Naive thymus-derived CD4-positive, alpha-beta T cell (primary cell): ENCODE measurements at regions of chr1 and their contacts with region 1.

Region 1: GRCh38 chr1:53485478-53486394 is 26.5 kb downstream of the DMRTB1 start:
- DNase-seq: peak in 7 of 9 donors; percentile 15 to 66 (median 42)
- ATAC-seq: peak; percentile 71
- H3K4me3 ChIP-seq: no peak overlapping the region
- H3K4me3 Mint-ChIP-seq: no peak overlapping the region
- H3K27ac ChIP-seq: no peak overlapping the region
- H3K27ac Mint-ChIP-seq: no peak overlapping the region
- H3K4me1 ChIP-seq: no peaks in the 10 kb centered on the region
- H3K4me1 Mint-ChIP-seq: peaks cover 0 to 9% (median 0%) of the 10 kb centered on the region in 7 donors
- H3K27me3 ChIP-seq: no peaks in the 10 kb centered on the region
- H3K27me3 Mint-ChIP-seq: peaks cover 20 to 52% (median 35%) of the 10 kb centered on the region in 5 donors

Region 2: GRCh38 chr1:53238197-53239155 is 247.3 kb before region 1 on chr1 and contains the start of gene MAGOH:
- CTCF ChIA-PET with region 1: no interaction called
- POLR2A ChIA-PET with region 1: no interaction called
- intact Hi-C with region 1: no loop called
- DNase-seq: peak; percentile 90 to 96 (median 95)
- ATAC-seq: peak; percentile 98
- H3K4me3 ChIP-seq: peak within 1 kb of the TSS; percentile 97
- H3K4me3 Mint-ChIP-seq: peak within 1 kb of the TSS; percentile 96 to 99 (median 98)
- H3K27ac ChIP-seq: peak within 1 kb of the TSS; percentile 94
- H3K27ac Mint-ChIP-seq: peak within 1 kb of the TSS; percentile 92 to 99 (median 98)
- H3K4me1 ChIP-seq: peaks cover 18 to 19% of the 10 kb centered on the region in 2 donors
- H3K4me1 Mint-ChIP-seq: peaks cover 18 to 47% (median 32%) of the 10 kb centered on the region in 7 donors
- H3K27me3 ChIP-seq: no peaks in the 10 kb centered on the region
- H3K27me3 Mint-ChIP-seq: peaks cover 0 to 2% (median 0%) of the 10 kb centered on the region in 5 donors
- total RNA-seq, gene MAGOH: 37.7 to 76.7 (median 52.3) TPM

Region 3: DNA sequence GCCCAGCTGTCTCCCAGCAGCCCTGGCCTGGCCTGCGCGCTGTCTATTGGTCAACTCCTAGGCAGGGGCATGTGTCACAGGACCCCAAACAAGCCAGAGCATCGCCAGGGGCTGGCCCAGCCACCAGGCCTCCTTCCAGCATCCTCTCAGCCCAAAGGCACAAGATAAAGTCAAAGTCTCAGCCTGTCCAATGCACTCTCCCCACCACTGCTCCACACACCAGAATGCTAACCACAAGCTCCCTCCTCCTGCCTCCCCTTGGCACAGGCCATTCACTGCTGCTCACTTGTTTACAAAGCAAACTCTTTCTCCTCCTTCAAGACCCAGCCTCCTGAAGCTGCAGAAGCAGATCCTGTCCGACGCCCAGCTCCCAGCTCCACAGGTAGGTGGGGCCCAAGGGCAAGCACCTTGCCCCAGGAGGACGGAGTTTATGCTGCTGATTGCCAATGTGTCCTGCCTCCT is 106.8 kb after region 1 on chr1:
- CTCF ChIA-PET with region 1: no interaction called
- POLR2A ChIA-PET with region 1: no interaction called
- intact Hi-C with region 1: loop called in 1 of 2 experiments (anchors 10 kb)
- DNase-seq: no peak
- ATAC-seq: no peak
- H3K4me3 ChIP-seq: no peak overlapping the region
- H3K4me3 Mint-ChIP-seq: no peak overlapping the region
- H3K27ac ChIP-seq: no peak overlapping the region
- H3K27ac Mint-ChIP-seq: no peak overlapping the region
- H3K4me1 ChIP-seq: no peaks in the 10 kb centered on the region
- H3K4me1 Mint-ChIP-seq: no peaks in the 10 kb centered on the region
- H3K27me3 ChIP-seq: no peaks in the 10 kb centered on the region
- H3K27me3 Mint-ChIP-seq: peaks cover 0 to 9% (median 0%) of the 10 kb centered on the region in 5 donors

Region 4: GRCh38 chr1:53681977-53682685 is 196.4 kb after region 1 on chr1:
- CTCF ChIA-PET with region 1: no interaction called
- POLR2A ChIA-PET with region 1: no interaction called
- intact Hi-C with region 1: loop called in 1 of 2 experiments (anchors 1 kb)
- DNase-seq: peak in 7 of 9 donors; percentile 13 to 40 (median 29)
- ATAC-seq: peak; percentile 51
- H3K4me3 ChIP-seq: no peak overlapping the region
- H3K4me3 Mint-ChIP-seq: peak overlapping the region in 8 of 10 donors; percentile 49 to 74 (median 64)
- H3K27ac ChIP-seq: no peak overlapping the region
- H3K27ac Mint-ChIP-seq: peak overlapping the region in 1 of 9 donors; percentile 32
- H3K4me1 ChIP-seq: peaks cover 0 to 6% of the 10 kb centered on the region in 2 donors
- H3K4me1 Mint-ChIP-seq: peaks cover 4 to 12% (median 8%) of the 10 kb centered on the region in 7 donors
- H3K27me3 ChIP-seq: no peaks in the 10 kb centered on the region
- H3K27me3 Mint-ChIP-seq: peaks cover 7 to 28% (median 19%) of the 10 kb centered on the region in 5 donors

Region 5: DNA sequence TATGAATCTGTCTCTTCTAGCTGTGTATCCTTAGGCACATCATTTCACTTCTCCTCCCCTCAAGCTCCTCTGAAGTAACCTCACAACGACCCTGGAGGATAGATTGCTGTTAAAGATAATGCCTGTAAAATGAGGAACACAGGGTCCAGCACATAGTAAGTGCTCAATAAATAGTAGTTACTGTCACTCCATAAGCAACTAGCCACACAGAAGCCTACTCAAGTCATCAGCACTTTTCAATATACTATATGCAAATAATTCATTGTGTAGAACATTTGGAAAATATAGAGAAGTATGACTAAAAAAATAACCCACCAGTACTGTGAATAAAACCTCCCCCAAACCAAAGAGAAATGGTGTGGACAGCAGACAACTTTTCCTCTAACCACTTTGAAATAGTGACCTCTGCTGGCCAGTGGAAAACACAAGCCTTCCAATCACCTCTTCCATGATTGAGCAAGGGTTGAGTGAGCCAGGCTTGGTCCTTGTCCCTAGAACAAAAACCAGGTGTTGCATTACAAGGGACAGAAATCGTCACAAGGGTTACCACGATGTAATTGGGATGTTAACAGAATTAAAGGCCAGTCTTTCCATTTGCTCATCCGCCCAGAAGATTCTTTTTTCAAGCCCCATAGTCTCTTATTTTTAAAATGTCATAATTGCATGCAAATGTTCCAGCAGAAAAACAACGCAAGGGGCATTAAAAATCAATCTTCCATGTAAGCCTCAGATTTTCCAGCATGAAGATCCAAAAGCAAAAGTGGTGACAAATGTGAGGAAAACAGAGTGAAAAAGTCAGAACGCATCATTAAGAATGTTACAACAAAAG is 269.0 kb after region 1 on chr1:
- CTCF ChIA-PET with region 1: no interaction called
- POLR2A ChIA-PET with region 1: no interaction called
- intact Hi-C with region 1: loop called in 1 of 2 experiments (anchors 1 kb)
- DNase-seq: peak in 2 of 9 donors; percentile 2 to 7
- ATAC-seq: no peak
- H3K4me3 ChIP-seq: no peak overlapping the region
- H3K4me3 Mint-ChIP-seq: no peak overlapping the region
- H3K27ac ChIP-seq: no peak overlapping the region
- H3K27ac Mint-ChIP-seq: no peak overlapping the region
- H3K4me1 ChIP-seq: no peaks in the 10 kb centered on the region
- H3K4me1 Mint-ChIP-seq: no peaks in the 10 kb centered on the region
- H3K27me3 ChIP-seq: no peaks in the 10 kb centered on the region
- H3K27me3 Mint-ChIP-seq: peaks cover 0 to 1% (median 0%) of the 10 kb centered on the region in 5 donors

Region 6: GRCh38 chr1:53959664-53960250 is 474.0 kb after region 1 on chr1:
- CTCF ChIA-PET with region 1: no interaction called
- POLR2A ChIA-PET with region 1: no interaction called
- intact Hi-C with region 1: loop called in 1 of 2 experiments (anchors 5 kb)
- DNase-seq: peak in 7 of 9 donors; percentile 33 to 62 (median 46)
- ATAC-seq: peak; percentile 86
- H3K4me3 ChIP-seq: no peak overlapping the region
- H3K4me3 Mint-ChIP-seq: no peak overlapping the region
- H3K27ac ChIP-seq: no peak overlapping the region
- H3K27ac Mint-ChIP-seq: no peak overlapping the region
- H3K4me1 ChIP-seq: no peaks in the 10 kb centered on the region
- H3K4me1 Mint-ChIP-seq: peaks cover 4 to 14% (median 5%) of the 10 kb centered on the region in 7 donors
- H3K27me3 ChIP-seq: no peaks in the 10 kb centered on the region
- H3K27me3 Mint-ChIP-seq: no peaks in the 10 kb centered on the region

Region 7: DNA sequence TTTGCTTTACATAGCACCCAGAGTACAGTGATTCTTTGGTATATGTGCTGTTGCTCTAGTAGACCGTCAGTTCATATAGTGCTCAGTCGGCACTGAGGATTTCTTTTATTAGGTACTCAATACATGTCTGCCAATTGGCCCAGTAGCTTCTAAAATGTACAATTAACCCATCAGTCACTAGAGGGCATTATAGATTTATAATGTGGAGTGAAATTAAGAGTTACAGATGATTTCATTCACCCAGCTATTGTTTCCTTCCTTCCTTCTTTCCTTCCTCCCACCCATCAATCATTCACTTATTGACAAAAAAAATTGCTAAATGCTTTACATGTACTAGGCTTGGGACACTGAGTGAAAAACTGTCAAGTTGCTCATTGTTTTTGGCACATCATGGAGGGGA is 1993.0 kb after region 1 on chr1:
- CTCF ChIA-PET with region 1: no interaction called
- POLR2A ChIA-PET with region 1: no interaction called
- intact Hi-C with region 1: no loop called
- DNase-seq: no peak
- ATAC-seq: no peak
- H3K4me3 ChIP-seq: no peak overlapping the region
- H3K4me3 Mint-ChIP-seq: no peak overlapping the region
- H3K27ac ChIP-seq: no peak overlapping the region
- H3K27ac Mint-ChIP-seq: no peak overlapping the region
- H3K4me1 ChIP-seq: no peaks in the 10 kb centered on the region
- H3K4me1 Mint-ChIP-seq: peaks cover 0 to 1% (median 0%) of the 10 kb centered on the region in 7 donors
- H3K27me3 ChIP-seq: no peaks in the 10 kb centered on the region
- H3K27me3 Mint-ChIP-seq: peaks cover 11 to 38% (median 26%) of the 10 kb centered on the region in 5 donors